Caco-2 (cell line): ENCODE measurements at regions of chr12 and their contacts with region 1.

Region 1: DNA sequence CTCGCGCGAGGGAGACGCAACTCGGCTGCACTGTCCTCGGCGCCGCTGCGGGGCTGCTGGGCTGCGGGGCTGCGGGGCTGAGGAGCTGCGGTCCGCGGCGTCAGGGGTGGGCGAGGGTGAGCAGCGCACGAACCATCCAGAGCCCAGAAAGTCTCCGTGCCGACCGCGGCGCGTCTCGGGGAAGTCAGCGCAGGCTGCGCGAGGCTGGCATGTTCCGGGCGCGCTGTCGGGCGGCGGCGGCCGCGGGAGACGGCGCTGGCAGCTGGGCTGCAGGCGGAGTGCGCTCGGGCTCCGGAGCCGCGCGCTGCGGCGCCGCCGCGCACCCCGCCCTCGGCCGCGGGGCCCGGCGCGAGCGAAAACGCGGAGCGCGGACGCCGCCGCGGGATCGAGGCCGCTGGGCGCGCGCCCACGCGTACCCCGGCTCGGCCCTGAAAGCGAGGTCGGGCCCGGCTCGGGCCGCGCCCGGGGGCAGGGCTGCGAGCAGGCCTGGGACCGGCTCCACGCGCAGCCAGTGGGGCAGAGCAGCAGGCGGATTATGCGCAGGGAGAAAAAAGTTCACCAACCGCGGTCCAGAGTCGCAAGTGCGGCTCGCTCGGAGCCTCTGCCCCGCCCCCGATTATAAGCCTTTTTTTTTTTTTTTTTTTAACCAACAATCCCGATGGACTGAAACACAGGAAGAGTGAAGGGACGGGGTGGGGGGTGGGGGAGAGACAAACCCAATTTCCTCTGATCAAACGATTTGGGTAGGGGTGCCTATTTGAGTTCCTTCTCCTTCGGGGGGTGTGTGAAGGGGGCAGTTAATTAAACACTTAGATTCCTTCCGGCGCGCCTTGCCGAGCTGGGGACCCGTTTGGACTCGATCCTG is at the start of gene PRICKLE1:
- DNase-seq: peak in 1 of 2 experiments; percentile 61
- H3K4me3 ChIP-seq: peak within 1 kb of the TSS; percentile 47
- H3K4me3 Mint-ChIP-seq: peak within 1 kb of the TSS; percentile 74
- H3K27ac Mint-ChIP-seq: no peak within 1 kb of the TSS
- H3K4me1 ChIP-seq: peaks cover 28% of the 10 kb centered on the region
- H3K4me1 Mint-ChIP-seq: peaks cover 26% of the 10 kb centered on the region
- H3K27me3 ChIP-seq: peaks cover 9% of the 10 kb centered on the region
- H3K27me3 Mint-ChIP-seq: peaks cover 4% of the 10 kb centered on the region
- CTCF ChIP-seq: no peak
- total RNA-seq, gene PRICKLE1: 3.8 and 4.5 TPM in 2 replicates

Region 2: GRCh38 chr12:42756841-42757661 is 167.4 kb after region 1 on chr12:
- CTCF ChIA-PET with region 1: no interaction called
- POLR2A ChIA-PET with region 1: no interaction called
- intact Hi-C with region 1: loop called (anchors 10 kb)
- DNase-seq: peak; percentile 71 to 82
- H3K4me3 ChIP-seq: no peak overlapping the region
- H3K4me3 Mint-ChIP-seq: peak overlapping the region; percentile 30
- H3K27ac Mint-ChIP-seq: peak overlapping the region; percentile 77
- H3K4me1 ChIP-seq: peaks cover 25% of the 10 kb centered on the region
- H3K4me1 Mint-ChIP-seq: peaks cover 16% of the 10 kb centered on the region
- H3K27me3 ChIP-seq: no peaks in the 10 kb centered on the region
- H3K27me3 Mint-ChIP-seq: no peaks in the 10 kb centered on the region
- CTCF ChIP-seq: no peak

Region 3: GRCh38 chr12:42961395-42961794 is 371.7 kb after region 1 on chr12:
- CTCF ChIA-PET with region 1: no interaction called
- POLR2A ChIA-PET with region 1: no interaction called
- intact Hi-C with region 1: loop called (anchors 5 kb)
- DNase-seq: peak; percentile 80 to 91
- H3K4me3 ChIP-seq: no peak overlapping the region
- H3K4me3 Mint-ChIP-seq: no peak overlapping the region
- H3K27ac Mint-ChIP-seq: peak overlapping the region; percentile 88
- H3K4me1 ChIP-seq: peaks cover 43% of the 10 kb centered on the region
- H3K4me1 Mint-ChIP-seq: peaks cover 22% of the 10 kb centered on the region
- H3K27me3 ChIP-seq: no peaks in the 10 kb centered on the region
- H3K27me3 Mint-ChIP-seq: no peaks in the 10 kb centered on the region
- CTCF ChIP-seq: no peak

Region 4: DNA sequence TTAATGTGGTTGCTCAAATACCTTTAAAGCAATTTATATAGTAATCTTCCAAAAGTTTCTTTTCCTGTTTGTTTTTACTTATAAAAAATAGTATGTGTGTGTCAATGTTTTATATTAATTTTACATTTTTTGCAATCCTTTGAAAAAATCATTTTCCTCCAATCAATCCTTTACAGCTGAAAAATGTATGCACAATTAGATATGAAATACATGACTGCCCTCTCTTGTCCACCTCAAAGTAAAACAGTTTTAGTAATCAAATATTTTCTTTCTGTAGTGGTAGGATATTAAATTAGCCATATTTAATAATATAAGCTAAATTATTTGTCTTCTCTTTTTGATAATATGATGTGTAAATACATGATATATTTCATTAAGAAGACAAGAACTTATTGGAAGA is 692.4 kb after region 1 on chr12:
- CTCF ChIA-PET with region 1: no interaction called
- POLR2A ChIA-PET with region 1: no interaction called
- intact Hi-C with region 1: loop called (anchors 2 kb)
- DNase-seq: no peak
- H3K4me3 ChIP-seq: no peak overlapping the region
- H3K4me3 Mint-ChIP-seq: no peak overlapping the region
- H3K27ac Mint-ChIP-seq: no peak overlapping the region
- H3K4me1 ChIP-seq: no peaks in the 10 kb centered on the region
- H3K4me1 Mint-ChIP-seq: peaks cover 10% of the 10 kb centered on the region
- H3K27me3 ChIP-seq: no peaks in the 10 kb centered on the region
- H3K27me3 Mint-ChIP-seq: no peaks in the 10 kb centered on the region
- CTCF ChIP-seq: no peak